ENCODE measurements at regions of chr19 and their contacts with region 1.

Region 1: DNA sequence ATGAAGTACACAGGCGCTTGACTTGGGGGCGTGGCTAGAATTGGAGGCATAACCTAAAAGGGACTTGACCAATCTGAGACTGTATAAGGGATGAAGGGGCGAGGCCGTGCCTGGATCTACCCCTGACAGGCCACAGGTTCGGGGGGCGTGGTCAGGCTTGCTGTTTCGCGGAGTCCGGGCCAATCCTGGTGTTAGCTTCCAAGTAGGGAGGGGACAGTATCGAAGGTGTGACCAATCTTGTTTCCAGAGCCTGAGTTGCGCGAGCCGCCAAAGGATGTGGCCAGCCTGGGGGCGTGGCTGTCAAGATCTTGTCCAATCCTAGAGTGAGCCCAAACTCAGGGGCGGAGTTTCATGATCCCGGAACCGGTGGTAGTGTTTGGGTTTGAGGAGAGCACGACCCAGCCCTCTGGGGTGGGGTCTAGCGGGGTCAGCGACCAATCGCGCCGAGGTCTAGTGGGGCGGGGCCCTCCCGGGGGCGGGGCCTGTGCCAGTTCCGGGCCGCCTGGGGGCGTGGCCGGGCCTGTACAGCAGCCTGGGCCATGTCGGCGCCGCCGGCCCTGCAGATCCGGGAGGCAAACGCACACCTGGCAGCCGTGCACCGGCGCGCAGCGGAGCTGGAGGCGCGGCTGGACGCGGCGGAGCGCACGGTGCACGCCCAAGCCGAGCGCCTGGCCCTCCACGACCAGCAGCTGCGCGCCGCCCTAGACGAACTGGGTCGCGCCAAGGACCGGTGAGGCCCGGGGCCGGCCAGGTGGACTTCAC is at the start of gene VMAC:
- DNase-seq: peak; percentile 100
- H3K4me3 ChIP-seq: peak within 1 kb of the TSS; percentile 97
- H3K4me3 Mint-ChIP-seq: peak within 1 kb of the TSS; percentile 91 to 97 (median 95)
- H3K27ac ChIP-seq: peak within 1 kb of the TSS; percentile 95
- H3K27ac Mint-ChIP-seq: peak within 1 kb of the TSS; percentile 95 to 100 (median 100)
- H3K4me1 ChIP-seq: peaks cover 37% of the 10 kb centered on the region
- H3K4me1 Mint-ChIP-seq: peaks cover 14 to 57% (median 35%) of the 10 kb centered on the region in 4 donors
- H3K27me3 ChIP-seq: no peaks in the 10 kb centered on the region
- H3K27me3 Mint-ChIP-seq: no peaks in the 10 kb centered on the region
- total RNA-seq, gene VMAC: 36.6 to 37.5 TPM

Region 2: DNA sequence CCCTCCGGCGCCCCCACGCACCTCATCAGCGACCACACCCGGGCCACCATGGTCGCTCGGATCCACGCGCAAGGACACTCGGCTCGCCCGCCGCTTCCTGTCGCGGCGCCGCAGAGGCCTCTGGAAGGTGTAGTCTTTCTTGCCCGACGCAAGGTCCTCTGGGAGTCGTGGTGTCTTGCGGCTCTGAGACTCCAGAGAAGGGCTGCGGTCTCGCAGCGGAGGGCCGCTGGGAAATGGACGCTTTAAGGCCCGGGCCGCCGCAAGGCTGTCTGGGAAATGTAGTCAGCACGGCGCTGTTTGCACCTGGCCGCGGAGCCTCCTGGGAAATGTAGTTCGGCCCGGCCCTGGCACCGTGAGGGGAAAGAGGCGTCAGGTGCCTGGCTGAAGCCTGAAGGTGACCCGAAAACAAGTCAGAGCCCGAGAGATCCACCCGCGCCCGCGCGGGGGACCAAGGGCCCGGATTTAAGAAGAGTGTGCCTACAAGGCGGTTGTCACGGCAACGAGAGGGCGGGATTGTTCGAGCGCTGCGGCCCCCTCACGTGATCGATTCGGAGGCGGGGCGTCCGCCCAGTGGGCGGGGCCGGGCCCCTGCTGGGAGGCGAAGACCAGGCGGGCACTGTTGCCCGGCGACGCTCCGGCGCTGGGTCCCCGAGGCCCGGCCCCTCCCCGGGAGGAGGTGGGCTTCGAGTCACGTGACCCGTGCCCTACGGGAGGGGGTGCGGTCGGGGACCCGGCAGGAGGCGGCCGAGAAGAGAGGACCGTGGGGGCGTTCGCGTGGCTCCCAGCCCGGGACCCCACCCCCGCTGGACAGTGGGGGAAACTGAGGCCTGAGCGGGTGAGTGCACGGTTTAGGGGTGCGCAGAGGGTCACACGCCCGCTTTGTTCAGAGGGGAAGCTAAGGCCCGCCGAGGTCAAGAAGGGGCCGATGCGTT is 223.8 kb before region 1 on chr19 and contains the starts of genes HSD11B1L and MICOS13:
- CTCF ChIA-PET with region 1: no interaction called
- POLR2A ChIA-PET with region 1: no interaction called
- intact Hi-C with region 1: loop called (anchors 1 kb)
- DNase-seq: peak; percentile 99 to 100 (median 99)
- H3K4me3 ChIP-seq: peak within 1 kb of the TSS; percentile 62 to 96
- H3K4me3 Mint-ChIP-seq: peak within 1 kb of the TSS; percentile 87 to 98 (median 93)
- H3K27ac ChIP-seq: peak within 1 kb of the TSS; percentile 87
- H3K27ac Mint-ChIP-seq: peak within 1 kb of the TSS; percentile 94 to 100 (median 99)
- H3K4me1 ChIP-seq: peaks cover 21% of the 10 kb centered on the region
- H3K4me1 Mint-ChIP-seq: peaks cover 18 to 41% (median 26%) of the 10 kb centered on the region in 4 donors
- H3K27me3 ChIP-seq: no peaks in the 10 kb centered on the region
- H3K27me3 Mint-ChIP-seq: no peaks in the 10 kb centered on the region
- total RNA-seq, gene HSD11B1L: 3.5 to 4.8 TPM
- total RNA-seq, gene MICOS13: 40.5 to 41.1 TPM

Region 3: DNA sequence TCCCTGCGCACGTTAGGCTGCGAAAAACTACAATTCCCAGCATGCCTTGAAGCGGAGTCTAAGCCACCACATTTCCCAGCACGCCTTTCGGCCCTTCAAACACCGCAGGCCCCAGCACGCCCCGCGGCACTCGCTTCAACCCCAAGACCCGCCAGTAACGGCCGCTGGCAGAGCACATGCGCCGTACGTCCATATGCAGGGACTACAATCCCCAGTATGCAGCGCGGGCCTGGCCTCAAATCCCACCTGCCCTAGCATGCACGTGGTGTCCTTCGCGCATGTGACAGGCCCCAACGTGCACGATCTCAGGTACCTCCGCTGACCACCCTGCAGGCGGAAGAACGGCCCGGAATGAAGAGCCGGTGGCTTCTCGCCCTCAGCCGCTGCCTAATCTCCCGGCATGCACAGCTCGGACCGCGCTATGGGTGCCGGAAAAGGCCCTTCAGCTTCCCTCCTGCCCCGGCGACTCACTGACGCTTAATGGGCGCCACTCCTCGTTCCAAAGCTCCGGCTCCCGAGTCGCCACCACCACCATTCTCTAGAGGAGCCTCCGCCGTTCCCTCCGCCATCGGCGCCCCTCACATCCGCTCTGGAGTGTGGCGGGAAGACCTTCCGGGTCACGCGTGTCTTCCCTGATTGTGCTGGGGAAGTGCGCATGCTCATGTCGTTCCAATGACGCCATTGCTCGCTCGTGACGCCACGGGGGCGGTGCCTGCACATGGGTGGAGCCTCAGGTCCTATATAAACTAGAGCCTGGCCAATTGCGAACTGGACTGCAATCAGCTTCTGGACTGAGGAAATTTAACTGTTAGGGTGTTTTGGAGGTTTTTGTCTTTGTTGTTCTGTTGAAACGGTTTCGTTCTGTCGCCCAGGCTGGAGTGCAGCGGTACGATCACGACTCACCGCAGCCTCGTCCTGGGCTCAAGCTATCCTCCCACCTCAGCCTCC is 113.7 kb before region 1 on chr19 and contains the start of gene DUS3L:
- CTCF ChIA-PET with region 1: no interaction called
- POLR2A ChIA-PET with region 1: interaction called, 31 read pairs
- intact Hi-C with region 1: loop called (anchors 1 kb)
- DNase-seq: peak; percentile 92 to 98 (median 97)
- H3K4me3 ChIP-seq: peak within 1 kb of the TSS; percentile 62 to 93
- H3K4me3 Mint-ChIP-seq: peak within 1 kb of the TSS; percentile 96 to 100 (median 99)
- H3K27ac ChIP-seq: peak within 1 kb of the TSS; percentile 97
- H3K27ac Mint-ChIP-seq: peak within 1 kb of the TSS; percentile 94 to 100 (median 100)
- H3K4me1 ChIP-seq: peaks cover 14% of the 10 kb centered on the region
- H3K4me1 Mint-ChIP-seq: peaks cover 11 to 24% (median 12%) of the 10 kb centered on the region in 4 donors
- H3K27me3 ChIP-seq: no peaks in the 10 kb centered on the region
- H3K27me3 Mint-ChIP-seq: peaks cover 0 to 2% of the 10 kb centered on the region in 2 donors
- total RNA-seq, gene DUS3L: 58.7 to 72.9 TPM

Region 4: DNA sequence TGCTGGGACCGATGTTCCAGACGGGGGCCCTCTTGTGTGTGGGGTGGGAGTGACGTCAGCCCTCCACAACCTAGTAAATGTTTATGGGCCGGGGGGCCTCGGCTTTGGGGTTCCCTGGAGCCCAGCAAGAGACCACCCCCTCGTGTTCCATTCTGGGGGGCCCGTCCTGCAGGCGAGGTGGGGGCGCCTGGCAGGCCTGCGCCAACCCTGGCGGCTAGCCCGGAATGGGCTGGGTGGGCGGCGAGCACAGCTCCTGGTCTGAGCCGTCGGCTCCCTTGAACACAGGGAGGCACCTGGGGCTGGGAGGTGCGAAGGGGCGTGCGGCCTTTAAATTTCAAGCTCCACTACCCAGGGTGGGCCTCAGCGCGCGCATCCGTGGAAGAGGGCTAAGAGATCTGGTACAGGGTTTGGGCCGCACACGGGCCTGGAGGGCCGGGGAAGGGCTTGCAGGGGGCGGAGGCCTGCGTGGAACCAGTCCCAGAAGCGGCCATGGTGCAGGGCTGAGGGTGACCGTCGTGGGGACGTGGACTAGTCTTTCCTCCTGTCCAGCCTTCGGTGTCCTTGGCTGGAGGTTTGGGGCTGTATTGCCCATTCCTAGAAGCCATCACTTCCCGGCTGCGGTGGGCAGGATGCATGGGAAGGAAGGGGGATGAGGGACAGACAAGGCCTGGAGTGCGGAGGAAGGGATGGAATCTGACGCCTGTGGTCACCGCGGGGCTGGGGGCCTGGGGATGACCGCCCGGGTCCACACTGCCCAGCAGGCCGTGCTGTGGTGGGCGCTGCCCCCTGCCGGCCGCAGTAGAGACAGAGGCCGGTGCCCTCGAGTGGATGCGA is 12.4 kb before region 1 on chr19:
- CTCF ChIA-PET with region 1: no interaction called
- POLR2A ChIA-PET with region 1: interaction called, 20 read pairs
- intact Hi-C with region 1: no loop called
- DNase-seq: no peak
- H3K4me3 ChIP-seq: no peak overlapping the region
- H3K4me3 Mint-ChIP-seq: no peak overlapping the region
- H3K27ac ChIP-seq: no peak overlapping the region
- H3K27ac Mint-ChIP-seq: no peak overlapping the region
- H3K4me1 ChIP-seq: no peaks in the 10 kb centered on the region
- H3K4me1 Mint-ChIP-seq: peaks cover 0 to 3% (median under 1%) of the 10 kb centered on the region in 4 donors
- H3K27me3 ChIP-seq: no peaks in the 10 kb centered on the region
- H3K27me3 Mint-ChIP-seq: peaks cover 0 to 5% of the 10 kb centered on the region in 2 donors

Region 5: GRCh38 chr19:5967994-5968430 is 63.5 kb after region 1 on chr19:
- CTCF ChIA-PET with region 1: interaction called, 14 read pairs
- POLR2A ChIA-PET with region 1: interaction called, 8 read pairs
- intact Hi-C with region 1: no loop called
- DNase-seq: peak; percentile 46 to 59 (median 56)
- H3K4me3 ChIP-seq: no peak overlapping the region
- H3K4me3 Mint-ChIP-seq: peak overlapping the region in 7 of 8 donors; percentile 9 to 73 (median 26)
- H3K27ac ChIP-seq: peak overlapping the region; percentile 43
- H3K27ac Mint-ChIP-seq: peak overlapping the region; percentile 28 to 94 (median 90)
- H3K4me1 ChIP-seq: peaks cover 95% of the 10 kb centered on the region
- H3K4me1 Mint-ChIP-seq: peaks cover 52 to 94% (median 72%) of the 10 kb centered on the region in 4 donors
- H3K27me3 ChIP-seq: no peaks in the 10 kb centered on the region
- H3K27me3 Mint-ChIP-seq: no peaks in the 10 kb centered on the region

Region 6: DNA sequence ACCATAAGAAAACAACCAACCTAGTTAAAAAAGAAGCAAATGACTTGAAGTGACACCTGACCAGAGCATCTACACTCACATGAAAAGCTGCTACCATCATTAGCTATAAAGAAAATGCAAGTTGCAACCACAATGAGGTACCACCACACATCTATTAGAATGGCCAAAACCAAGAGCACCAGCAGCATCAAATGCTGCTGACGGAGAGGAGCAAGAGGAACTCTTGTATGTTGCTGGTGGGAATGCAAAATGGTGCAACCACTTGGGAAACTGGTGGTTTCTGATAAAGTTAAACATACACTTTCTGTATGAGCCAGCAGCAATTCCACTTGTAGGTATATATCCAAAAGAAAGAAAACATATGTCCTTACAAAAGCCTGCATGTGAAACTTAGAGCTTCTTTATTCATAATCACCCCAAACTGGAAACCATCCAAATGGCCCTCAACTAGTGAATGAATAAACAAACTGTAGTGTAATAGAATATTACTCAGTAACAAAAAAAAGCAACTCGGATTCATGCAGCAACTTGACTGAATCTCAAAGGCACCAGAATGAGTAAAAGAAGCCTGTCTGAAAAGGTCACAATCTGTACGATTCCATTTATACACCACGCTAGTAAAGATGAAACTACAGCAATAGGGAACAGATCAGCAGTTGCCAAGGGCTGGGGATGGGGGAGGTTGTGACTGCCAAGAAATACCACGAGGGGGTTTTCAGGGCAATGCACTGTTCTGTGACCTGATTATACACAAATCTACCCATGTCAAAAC is 134.3 kb after region 1 on chr19:
- CTCF ChIA-PET with region 1: no interaction called
- POLR2A ChIA-PET with region 1: no interaction called
- intact Hi-C with region 1: no loop called
- DNase-seq: no peak
- H3K4me3 ChIP-seq: no peak overlapping the region
- H3K4me3 Mint-ChIP-seq: no peak overlapping the region
- H3K27ac ChIP-seq: no peak overlapping the region
- H3K27ac Mint-ChIP-seq: peak overlapping the region in 1 of 7 donors; percentile 0
- H3K4me1 ChIP-seq: no peaks in the 10 kb centered on the region
- H3K4me1 Mint-ChIP-seq: peaks cover 0 to 4% (median 2%) of the 10 kb centered on the region in 4 donors
- H3K27me3 ChIP-seq: no peaks in the 10 kb centered on the region
- H3K27me3 Mint-ChIP-seq: no peaks in the 10 kb centered on the region

Region 7: GRCh38 chr19:6372594-6373095 is 468.1 kb after region 1 on chr19 and contains the start of gene ALKBH7:
- CTCF ChIA-PET with region 1: no interaction called
- POLR2A ChIA-PET with region 1: no interaction called
- intact Hi-C with region 1: loop called (anchors 2 kb)
- DNase-seq: peak; percentile 97 to 99 (median 99)
- H3K4me3 ChIP-seq: peak within 1 kb of the TSS; percentile 66 to 90
- H3K4me3 Mint-ChIP-seq: peak within 1 kb of the TSS; percentile 84 to 95 (median 92)
- H3K27ac ChIP-seq: peak within 1 kb of the TSS; percentile 92
- H3K27ac Mint-ChIP-seq: peak within 1 kb of the TSS; percentile 90 to 97 (median 95)
- H3K4me1 ChIP-seq: peaks cover 15% of the 10 kb centered on the region
- H3K4me1 Mint-ChIP-seq: peaks cover 13 to 30% (median 20%) of the 10 kb centered on the region in 4 donors
- H3K27me3 ChIP-seq: no peaks in the 10 kb centered on the region
- H3K27me3 Mint-ChIP-seq: no peaks in the 10 kb centered on the region
- total RNA-seq, gene ALKBH7: 67.4 to 73.4 TPM

Measured in CD4-positive, alpha-beta memory T cell (primary cell).